Activated naive CD4-positive, alpha-beta T cell treated with anti-CD3 and anti-CD28 coated beads for 36 hours (primary cell): ENCODE measurements at regions of chr20 and their contacts with region 1.

Region 1: DNA sequence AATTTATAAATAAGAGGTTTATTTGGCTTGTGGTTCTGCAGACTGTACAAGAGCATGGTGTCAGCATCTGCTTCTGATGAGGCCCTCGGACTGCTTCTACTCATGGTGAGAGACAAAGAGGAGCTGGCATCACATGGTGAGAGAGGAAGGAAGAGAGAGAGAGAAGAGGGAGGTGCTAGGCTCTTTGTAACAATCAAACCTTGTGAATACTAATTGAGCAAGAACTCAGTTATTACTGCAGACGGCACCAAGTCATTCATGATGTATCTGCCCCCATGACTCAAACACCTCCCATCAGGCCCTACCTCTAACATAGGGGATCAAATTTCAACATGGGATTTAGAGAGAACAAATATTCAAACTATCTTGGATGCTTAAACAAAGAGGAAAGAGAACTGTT is 6.3 kb upstream of the SIRPG start:
- DNase-seq: peak; percentile 69
- H3K4me3 Mint-ChIP-seq: peak overlapping the region; percentile 45
- H3K27ac Mint-ChIP-seq: peak overlapping the region; percentile 98
- H3K4me1 Mint-ChIP-seq: peaks cover 90% of the 10 kb centered on the region
- H3K27me3 Mint-ChIP-seq: no peaks in the 10 kb centered on the region

Region 2: GRCh38 chr20:1466211-1467081 is 197.5 kb before region 1 on chr20 and contains the start of gene NSFL1C:
- CTCF ChIA-PET with region 1: no interaction called
- intact Hi-C with region 1: loop called (anchors 5 kb)
- DNase-seq: peak; percentile 97
- H3K4me3 Mint-ChIP-seq: peak within 1 kb of the TSS; percentile 80
- H3K27ac Mint-ChIP-seq: peak within 1 kb of the TSS; percentile 71
- H3K4me1 Mint-ChIP-seq: peaks cover 44% of the 10 kb centered on the region
- H3K27me3 Mint-ChIP-seq: peaks cover 6% of the 10 kb centered on the region
- total RNA-seq, gene NSFL1C: 80.4 to 84.1 TPM

Region 3: DNA sequence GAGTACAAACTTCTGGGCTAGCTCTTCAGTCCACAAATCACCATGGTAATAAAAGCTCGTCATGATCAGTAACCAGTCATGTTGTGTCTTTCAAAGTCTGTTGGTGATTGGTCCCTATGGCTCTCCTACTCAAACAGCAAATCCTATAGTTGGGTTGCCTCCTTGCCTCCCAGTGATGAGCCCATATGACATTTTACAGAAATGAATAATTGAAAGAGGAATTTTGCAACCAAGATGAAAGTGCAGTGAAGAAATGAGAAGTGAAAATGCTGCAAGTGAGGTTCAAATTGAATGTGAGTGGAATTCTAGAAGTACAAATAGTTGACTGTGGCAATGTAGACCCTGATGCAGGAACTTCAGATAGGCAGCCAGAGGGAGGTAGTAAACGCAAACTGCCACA is 101.3 kb before region 1 on chr20:
- CTCF ChIA-PET with region 1: no interaction called
- intact Hi-C with region 1: no loop called
- DNase-seq: no peak
- H3K4me3 Mint-ChIP-seq: no peak overlapping the region
- H3K27ac Mint-ChIP-seq: no peak overlapping the region
- H3K4me1 Mint-ChIP-seq: peaks cover 13% of the 10 kb centered on the region
- H3K27me3 Mint-ChIP-seq: no peaks in the 10 kb centered on the region

Region 4: DNA sequence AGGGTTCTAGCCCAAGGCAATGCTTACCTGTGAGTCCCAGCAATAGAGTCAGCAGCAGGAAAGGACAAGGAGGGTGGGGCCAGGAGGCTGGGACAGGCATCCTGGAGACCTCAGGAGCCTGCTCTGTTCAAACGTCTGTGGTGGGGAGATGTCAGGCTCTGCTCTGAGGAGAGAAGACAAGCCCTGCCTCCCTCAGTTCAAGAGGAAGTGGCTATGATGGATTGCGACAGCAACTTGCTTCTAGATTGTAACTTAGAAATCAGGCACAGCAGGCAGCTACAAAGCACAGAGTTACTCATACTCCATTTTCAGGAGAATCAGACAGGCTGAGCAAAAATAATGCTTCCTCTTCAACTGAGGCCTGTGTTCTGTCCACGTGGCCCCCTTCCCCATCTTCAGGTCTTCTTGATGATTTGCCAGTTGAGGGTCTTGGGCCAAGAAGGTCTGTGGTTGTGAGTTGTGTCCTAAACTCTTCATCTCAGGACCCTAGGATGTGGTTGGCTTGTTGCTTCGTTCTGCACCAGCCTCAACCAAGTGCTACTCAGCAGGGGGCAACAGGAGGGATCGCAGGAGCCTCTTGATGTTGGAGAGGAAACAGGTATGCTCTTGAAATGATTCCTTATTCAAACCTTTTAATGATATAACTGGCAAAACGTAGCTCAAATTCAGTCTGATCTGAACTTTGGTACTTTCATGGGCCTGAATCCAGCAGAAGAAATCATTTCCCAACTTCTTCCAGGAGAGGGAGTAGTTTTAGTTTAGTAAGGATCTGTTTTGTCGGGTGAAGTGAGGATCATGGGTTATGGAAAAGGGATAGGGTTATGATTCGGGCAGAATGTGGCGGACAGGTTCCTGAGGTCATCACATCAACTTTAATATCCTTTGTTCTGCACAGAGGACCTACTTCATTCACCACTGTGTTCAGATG is 75.1 kb before region 1 on chr20:
- CTCF ChIA-PET with region 1: no interaction called
- intact Hi-C with region 1: loop called (anchors 2 kb)
- DNase-seq: peak; percentile 58
- H3K4me3 Mint-ChIP-seq: peak overlapping the region; percentile 20
- H3K27ac Mint-ChIP-seq: peak overlapping the region; percentile 88
- H3K4me1 Mint-ChIP-seq: peaks cover 42% of the 10 kb centered on the region
- H3K27me3 Mint-ChIP-seq: no peaks in the 10 kb centered on the region

Region 5: DNA sequence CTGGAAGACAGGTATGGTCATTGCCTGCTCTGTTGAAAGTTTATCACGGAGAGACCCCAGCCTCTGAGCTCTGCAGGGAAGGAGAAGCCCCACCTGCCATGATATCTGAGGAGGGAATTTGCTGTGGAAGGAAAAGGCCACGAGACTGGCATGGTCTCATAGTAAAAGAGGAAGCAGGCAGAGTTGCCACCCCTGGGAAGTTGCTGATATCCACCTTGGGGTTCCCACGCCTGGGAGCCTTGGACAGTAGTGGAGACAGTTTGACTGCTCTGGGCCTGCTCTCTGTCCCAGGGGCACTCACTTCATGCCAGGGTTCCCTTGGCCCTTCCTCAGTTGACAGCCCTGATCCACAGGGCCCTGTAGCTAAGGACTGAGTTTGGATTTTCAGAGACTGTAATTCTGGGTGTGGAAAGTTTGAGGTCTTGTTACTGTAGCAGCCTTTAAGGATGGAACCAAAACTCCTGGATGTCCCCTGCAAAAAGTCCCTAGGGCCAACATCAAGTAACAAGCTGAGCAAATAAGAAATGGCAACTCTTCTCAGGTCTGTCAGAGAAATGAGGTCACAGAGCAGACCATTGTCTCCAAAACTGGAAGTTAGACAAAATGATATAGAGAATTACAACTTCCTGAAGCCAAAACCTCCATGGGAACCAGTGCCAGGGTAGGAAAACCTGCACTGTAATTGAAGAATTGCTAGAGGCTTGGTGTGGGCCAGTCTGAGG is 37.2 kb before region 1 on chr20:
- CTCF ChIA-PET with region 1: interaction called, 5 read pairs
- intact Hi-C with region 1: loop called (anchors 1 kb)
- DNase-seq: peak; percentile 18
- H3K4me3 Mint-ChIP-seq: no peak overlapping the region
- H3K27ac Mint-ChIP-seq: peak overlapping the region; percentile 89
- H3K4me1 Mint-ChIP-seq: peaks cover 94% of the 10 kb centered on the region
- H3K27me3 Mint-ChIP-seq: no peaks in the 10 kb centered on the region

Region 6: DNA sequence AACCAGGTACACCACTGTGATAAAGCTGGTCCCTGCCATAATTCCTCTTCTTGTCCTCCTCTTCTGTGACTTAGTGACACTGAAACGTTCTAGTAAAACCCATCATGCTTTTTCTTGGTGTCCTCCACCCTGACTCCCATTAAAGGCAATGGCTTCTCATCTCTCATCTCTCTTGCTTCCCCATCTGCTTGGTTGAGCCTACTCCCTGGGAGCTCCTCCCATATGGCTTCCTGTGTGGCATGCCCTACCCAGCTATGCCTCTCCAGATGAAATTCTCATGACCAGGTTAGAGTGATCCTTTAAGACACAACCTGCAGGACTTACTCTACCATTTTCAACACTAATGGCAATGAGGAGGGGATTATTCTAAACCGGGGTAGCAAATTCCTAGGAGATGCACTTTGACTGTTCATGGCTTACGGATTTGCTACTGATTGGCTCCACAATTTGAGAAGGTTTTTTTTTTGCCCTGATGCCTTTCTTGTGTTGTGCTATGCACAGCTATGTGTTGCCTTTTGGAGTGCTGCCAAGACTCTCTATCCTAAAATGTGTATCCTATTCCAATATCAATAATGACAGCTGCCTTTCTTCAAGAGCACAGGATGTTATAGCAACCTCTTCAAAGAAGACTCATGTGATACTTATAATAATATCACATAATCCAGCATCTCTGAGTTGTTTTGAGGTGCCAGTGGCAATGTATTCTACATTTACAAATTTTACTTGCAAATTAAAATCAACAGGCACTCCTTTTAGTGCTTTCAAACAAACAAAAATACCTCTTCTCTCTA is 12.5 kb before region 1 on chr20:
- CTCF ChIA-PET with region 1: interaction called, 4 read pairs
- intact Hi-C with region 1: loop called (anchors 1 kb)
- DNase-seq: peak; percentile 36
- H3K4me3 Mint-ChIP-seq: no peak overlapping the region
- H3K27ac Mint-ChIP-seq: peak overlapping the region; percentile 43
- H3K4me1 Mint-ChIP-seq: peaks cover 84% of the 10 kb centered on the region
- H3K27me3 Mint-ChIP-seq: no peaks in the 10 kb centered on the region

Region 7: DNA sequence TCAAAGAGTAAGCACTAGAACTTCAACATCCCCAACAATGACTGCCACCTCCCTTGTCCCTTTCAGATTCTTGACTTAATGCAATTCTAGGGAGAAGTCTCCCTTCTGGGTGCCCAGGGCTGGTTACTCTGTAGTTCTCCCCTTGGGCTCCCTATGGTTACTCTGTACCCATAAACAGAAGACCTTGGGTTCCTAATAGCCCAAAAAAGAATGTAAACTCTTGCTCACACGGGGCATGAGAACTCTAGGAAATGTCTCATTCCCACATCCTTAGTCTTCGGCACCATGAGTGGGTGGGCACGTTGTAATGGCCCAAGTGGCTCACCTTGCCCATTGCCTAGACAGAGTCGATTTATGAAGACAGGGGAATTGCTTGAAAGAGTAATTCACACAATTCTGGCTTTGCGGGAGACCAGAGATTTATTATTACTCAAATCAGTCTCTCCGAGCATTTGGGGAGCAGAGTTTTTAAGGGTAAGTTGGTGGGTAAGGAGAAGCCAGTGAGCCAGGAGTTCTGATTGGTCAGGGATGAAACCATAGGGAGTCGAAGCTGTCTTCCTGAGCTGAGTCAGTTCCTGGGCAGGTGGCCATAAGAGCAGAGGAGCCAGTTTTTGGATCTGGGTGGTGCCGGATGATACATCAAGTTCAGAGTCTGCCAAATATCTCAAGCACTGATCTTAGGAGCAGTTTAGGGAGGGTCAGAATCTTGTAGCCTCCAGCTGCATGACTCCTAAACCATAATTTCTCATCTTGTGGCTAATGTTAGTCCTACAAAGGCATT is 54.9 kb after region 1 on chr20:
- CTCF ChIA-PET with region 1: no interaction called
- intact Hi-C with region 1: no loop called
- DNase-seq: no peak
- H3K4me3 Mint-ChIP-seq: no peak overlapping the region
- H3K27ac Mint-ChIP-seq: no peak overlapping the region
- H3K4me1 Mint-ChIP-seq: peaks cover 17% of the 10 kb centered on the region
- H3K27me3 Mint-ChIP-seq: no peaks in the 10 kb centered on the region

Region 8: DNA sequence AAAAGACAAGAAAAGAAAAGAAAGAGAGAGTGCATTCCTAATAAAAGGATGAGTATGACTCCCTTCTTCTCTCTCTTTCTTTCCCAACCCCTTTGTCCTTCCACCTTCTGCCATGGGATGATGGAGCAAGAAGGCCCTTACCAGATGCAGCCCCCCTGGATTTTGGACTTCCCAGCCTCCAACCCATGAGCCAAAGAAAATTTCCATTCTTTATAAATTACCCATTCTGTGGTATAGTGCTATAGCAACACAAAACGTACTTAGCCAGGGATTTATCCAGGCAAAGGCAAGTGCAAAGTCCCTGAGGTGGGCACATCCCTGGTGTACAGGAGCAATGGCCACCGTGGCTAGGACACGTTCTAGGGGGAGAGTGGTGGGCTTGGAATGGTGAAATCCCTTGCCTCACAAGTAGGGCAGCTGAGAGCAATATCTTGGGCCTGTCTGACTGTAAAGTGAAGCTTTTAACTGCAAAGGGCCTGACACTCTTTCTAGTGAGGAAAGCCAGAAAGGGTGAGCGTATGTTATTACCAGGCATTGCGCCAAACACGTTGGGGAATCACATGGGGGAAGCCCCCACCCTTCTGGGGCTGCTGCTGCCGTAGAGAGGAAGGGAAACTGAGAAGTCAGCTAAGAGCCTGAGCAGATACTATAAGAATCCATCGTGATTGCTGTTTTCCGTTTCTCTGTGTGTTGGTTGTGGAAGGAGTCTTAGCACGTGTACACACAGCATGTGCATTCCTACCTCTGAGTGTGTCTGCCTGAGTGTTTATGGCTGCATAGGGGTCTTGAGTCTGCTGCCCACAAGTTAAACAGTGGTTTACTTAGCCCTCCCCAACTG is 180.6 kb after region 1 on chr20:
- CTCF ChIA-PET with region 1: no interaction called
- intact Hi-C with region 1: loop called (anchors 10 kb)
- DNase-seq: peak; percentile 90
- H3K4me3 Mint-ChIP-seq: no peak overlapping the region
- H3K27ac Mint-ChIP-seq: peak overlapping the region; percentile 77
- H3K4me1 Mint-ChIP-seq: peaks cover 12% of the 10 kb centered on the region
- H3K27me3 Mint-ChIP-seq: peaks cover 5% of the 10 kb centered on the region